Motor neuron (in vitro differentiated cells): ENCODE measurements at regions of chr1 and their contacts with region 1.

Region 1: DNA sequence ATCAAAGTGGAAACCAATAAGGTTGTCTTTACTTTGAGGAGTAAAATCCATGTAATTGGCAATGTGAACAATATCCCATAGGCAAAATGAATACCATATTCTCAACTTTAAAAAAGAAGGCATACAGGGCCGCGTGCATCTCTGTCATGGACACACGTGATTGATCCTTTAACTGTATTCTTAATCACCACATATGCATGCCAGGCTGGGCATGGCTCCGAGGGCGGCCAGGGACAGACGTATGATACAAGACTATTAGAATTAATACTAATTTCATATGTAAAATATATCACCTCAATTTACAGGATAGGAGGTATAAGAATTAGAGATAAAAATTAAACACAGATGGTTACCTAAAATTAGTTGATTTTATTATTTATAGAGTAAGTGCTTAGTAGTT is 11.2 kb downstream of the RGS21 start:
- ATAC-seq: no peak
- H3K4me3 ChIP-seq: no peak overlapping the region
- H3K27ac ChIP-seq: no peak overlapping the region
- H3K4me1 ChIP-seq: no peaks in the 10 kb centered on the region

Region 2: DNA sequence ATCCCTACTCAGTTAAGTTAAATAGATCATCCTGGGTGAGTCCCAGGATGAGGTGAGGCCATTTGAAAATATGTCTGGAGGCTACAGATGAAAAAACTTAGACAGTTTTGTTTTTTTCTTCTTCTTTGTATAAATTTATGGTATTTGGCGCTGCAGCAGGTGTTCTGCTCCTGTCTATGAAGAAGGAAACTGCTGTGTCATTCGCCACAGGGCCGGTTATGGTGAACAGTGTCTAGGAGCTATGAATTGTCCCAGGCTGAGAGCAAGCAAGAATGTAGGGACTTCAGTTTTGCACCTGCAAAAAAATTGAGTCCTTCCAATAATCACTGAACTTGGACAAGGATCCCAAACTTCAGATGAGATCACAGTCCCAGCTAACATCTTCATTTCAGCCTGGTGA is 844.0 kb before region 1 on chr1:
- in situ Hi-C with region 1: no loop called
- ATAC-seq: no peak
- H3K4me3 ChIP-seq: no peak overlapping the region
- H3K27ac ChIP-seq: no peak overlapping the region
- H3K4me1 ChIP-seq: no peaks in the 10 kb centered on the region

Region 3: GRCh38 chr1:191517803-191518202 is 810.2 kb before region 1 on chr1:
- in situ Hi-C with region 1: no loop called
- ATAC-seq: no peak
- H3K4me3 ChIP-seq: no peak overlapping the region
- H3K27ac ChIP-seq: no peak overlapping the region
- H3K4me1 ChIP-seq: no peaks in the 10 kb centered on the region

Region 4: DNA sequence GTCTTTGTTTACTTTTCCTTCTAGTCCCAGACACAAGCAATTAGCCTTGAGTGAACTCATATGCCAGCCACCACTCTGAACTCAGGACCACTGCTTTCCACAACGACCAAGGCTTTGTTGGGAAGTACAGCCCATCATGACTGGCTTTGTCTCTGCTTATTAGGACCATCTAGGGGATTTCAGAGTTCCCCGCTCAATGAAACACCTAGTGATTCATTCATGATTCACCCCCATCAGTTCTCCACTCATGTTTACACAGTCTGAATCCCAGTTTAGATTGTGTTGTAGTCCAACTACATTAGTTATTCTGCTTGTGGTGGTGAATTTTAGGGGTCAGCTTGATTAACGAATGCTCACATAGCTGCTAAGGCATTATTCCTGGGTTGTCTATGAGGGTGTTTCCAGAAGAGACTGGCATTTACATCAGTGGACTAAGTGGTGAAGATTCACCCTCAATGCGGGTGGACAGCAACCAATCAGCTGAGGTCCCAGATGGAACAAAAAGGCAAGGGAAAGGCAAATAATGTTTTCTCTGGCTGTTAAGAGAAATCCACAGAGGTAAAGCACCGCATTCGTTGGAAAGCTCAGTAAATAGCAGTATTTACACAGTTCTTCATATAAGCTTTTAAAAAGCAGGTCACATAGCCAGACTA is 111.5 kb after region 1 on chr1:
- in situ Hi-C with region 1: loop called in 1 of 9 experiments (anchors 10 kb)
- ATAC-seq: peak in 3 of 8 experiments; percentile 18 to 63 (median 50)
- H3K4me3 ChIP-seq: no peak overlapping the region
- H3K27ac ChIP-seq: no peak overlapping the region
- H3K4me1 ChIP-seq: no peaks in the 10 kb centered on the region

Region 5: DNA sequence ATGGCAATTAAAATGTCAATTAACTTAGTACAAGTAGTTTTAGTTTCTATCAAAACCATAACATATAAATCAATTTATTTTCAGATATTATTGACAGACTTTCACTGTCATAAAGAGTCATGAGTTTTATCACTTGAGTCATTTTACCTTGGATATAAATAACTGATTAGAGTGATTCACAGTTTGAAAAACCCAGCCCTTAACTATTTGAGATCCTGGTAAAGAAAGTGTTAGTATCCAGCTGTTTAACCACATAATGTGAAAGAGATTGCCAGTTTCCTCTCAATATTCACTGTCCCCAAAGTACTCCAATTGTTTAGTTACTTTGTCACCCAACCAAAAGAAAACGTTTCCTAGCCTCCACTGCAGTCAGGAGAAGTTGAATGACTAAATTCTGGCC is 639.9 kb after region 1 on chr1:
- in situ Hi-C with region 1: no loop called
- ATAC-seq: peak in 2 of 8 experiments; percentile 48 to 51
- H3K4me3 ChIP-seq: no peak overlapping the region
- H3K27ac ChIP-seq: no peak overlapping the region
- H3K4me1 ChIP-seq: no peaks in the 10 kb centered on the region